H1 (cell line): ENCODE measurements at regions of chr1 and their contacts with region 1.

Region 1: DNA sequence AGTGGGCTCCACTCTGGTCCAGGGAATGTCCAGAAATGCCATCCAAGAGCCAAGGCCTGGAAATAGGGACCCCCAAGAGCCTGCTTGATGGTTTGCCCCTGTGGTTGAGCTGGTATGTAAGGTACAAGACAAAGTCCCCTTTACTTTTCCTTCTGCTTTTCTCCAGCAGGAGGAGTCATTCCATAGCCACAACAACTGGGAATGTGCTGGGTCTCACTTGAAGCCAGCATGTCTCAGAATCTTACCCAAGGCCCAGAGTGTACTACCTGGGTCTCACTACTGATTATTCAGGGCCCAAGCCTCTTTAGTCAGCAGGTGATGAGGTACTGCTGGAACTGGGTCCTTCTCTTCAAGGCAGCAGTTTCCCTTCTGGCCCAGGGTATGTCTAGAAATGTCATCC is 62.1 kb upstream of the CD55 start:
- DNase-seq: no peak
- H3K4me3 ChIP-seq: no peak overlapping the region
- H3K27ac ChIP-seq: no peak overlapping the region
- H3K4me1 ChIP-seq: no peaks in the 10 kb centered on the region
- H3K27me3 ChIP-seq: no peaks in the 10 kb centered on the region
- CTCF ChIP-seq: peak; percentile 5 to 70 (median 68)
- EP300 ChIP-seq: 0 out of 3 replicates have a peak, but pooled peaks of 1 of the 2 experiments have one; percentile 8
- POLR2A ChIP-seq: no peak
- RAD21 ChIP-seq: peak; percentile 77 to 78

Region 2: DNA sequence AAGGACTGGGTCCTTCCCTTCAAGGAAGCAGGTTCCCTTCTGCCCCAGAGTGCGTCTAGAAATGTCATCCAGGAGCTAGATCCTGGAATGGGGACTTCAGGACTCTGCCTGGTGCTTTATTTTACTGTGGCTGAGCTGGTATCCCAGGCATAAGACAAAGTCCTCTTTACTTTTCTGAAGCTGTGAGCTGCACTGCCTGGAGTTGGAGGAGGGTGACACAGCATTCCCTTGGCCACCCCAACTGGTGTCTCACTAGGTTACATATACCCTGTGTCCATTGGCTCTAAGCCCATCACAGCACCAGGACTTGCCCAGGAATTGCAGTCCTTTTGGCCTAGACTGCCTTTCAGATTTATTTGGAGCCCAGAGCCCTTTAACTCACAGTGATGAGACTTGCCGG is 20.3 kb after region 1 on chr1:
- CTCF ChIA-PET with region 1: interaction called, 11 read pairs
- POLR2A ChIA-PET with region 1: no interaction called
- DNase-seq: no peak
- H3K4me3 ChIP-seq: no peak overlapping the region
- H3K27ac ChIP-seq: no peak overlapping the region
- H3K4me1 ChIP-seq: no peaks in the 10 kb centered on the region
- H3K27me3 ChIP-seq: no peaks in the 10 kb centered on the region
- CTCF ChIP-seq: no peak
- EP300 ChIP-seq: no peak
- POLR2A ChIP-seq: no peak
- RAD21 ChIP-seq: no peak

Region 3: GRCh38 chr1:207288315-207288714 is 28.9 kb after region 1 on chr1:
- CTCF ChIA-PET with region 1: interaction called, 13 read pairs
- POLR2A ChIA-PET with region 1: no interaction called
- DNase-seq: no peak
- H3K4me3 ChIP-seq: no peak overlapping the region
- H3K27ac ChIP-seq: no peak overlapping the region
- H3K4me1 ChIP-seq: no peaks in the 10 kb centered on the region; a peak in 1 of 7 replicates
- H3K27me3 ChIP-seq: no peaks in the 10 kb centered on the region
- CTCF ChIP-seq: no peak
- EP300 ChIP-seq: no peak
- POLR2A ChIP-seq: no peak
- RAD21 ChIP-seq: no peak